Posterior vena cava (tissue), 2 donors: ENCODE measurements at regions of chr21 and their contacts with region 1.

Region 1: GRCh38 chr21:32406405-32406804 is 6.1 kb upstream of the EVA1C start:
- DNase-seq: no peak

Region 2: GRCh38 chr21:32457360-32457840 is 51.0 kb after region 1 on chr21:
- intact Hi-C with region 1: loop called (anchors 5 kb)
- DNase-seq: no peak